ENCODE measurements at regions of chr2 and their contacts with region 1.

Region 1: DNA sequence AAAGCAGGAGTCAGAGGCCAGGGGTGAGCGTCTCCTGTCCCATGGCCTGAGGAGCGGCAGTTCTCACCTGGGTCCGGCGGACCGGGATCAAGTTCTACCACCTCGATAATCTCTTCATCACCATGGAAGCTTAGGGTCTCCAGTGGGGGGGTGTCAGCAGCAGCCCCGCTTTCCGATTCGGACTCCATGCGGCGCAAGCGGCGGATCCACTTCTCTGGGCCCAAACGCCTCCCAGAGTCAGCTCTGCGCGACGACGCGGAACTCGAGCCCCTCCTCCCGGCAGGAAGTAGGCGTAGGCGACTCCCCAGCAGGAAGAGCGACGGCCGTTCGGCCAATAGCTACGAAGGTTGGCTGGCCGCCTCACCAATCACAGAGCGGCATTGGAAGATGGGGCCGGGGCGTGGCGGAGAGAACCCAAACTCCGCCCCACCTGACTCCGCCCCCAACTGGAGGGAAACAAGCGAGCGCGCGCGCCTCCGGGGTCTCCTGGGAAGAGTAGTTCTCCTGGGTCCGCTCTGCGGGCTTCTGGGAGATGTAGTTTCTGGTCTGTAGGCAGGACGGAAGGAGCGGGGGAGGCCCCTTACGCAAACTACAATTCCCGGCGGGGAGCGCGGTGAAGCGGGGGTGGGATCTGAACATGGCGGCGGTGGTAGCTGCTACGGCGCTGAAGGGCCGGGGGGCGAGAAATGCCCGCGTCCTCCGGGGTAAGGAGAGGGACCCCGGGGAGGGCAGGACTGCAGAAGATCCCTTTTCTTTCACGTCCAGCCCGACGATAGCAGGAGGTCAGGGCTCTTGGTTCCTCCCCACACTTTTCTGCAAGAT is at the starts of genes AAMP and PNKD:
- DNase-seq: peak; percentile 100
- ATAC-seq: peak; percentile 94
- total RNA-seq, gene AAMP: 48.4 TPM
- total RNA-seq, gene PNKD: 72.9 TPM

Region 2: GRCh38 chr2:218186355-218186766 is 83.7 kb before region 1 on chr2:
- intact Hi-C with region 1: loop called (anchors 5 kb)
- DNase-seq: peak; percentile 72
- ATAC-seq: peak; percentile 95

Region 3: DNA sequence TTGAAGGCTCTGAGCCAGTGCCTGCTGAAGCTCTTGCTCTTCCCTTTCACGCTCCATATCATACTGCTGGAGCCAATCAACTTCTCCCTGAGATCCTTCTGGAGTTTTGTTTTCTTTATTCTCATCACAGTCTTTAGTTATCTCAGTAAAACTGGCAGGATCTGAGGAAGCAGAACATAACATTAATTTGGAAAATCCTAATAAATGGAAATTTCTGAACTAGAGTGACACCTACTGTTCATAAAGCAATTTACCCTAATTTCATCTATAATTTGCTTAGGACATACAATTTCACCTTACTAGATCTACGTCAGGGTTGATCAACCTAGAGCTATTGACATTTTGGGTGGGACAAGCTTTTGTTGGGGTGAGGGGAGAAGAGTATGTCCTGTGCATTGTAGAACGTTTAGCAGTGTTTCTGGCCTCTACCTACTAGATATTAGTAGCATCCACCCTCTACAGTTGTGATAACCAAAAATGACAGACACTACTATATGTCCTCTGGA is 196.0 kb after region 1 on chr2:
- intact Hi-C with region 1: loop called (anchors 10 kb)
- DNase-seq: no peak
- ATAC-seq: peak; percentile 43

Region 4: GRCh38 chr2:218710687-218711549 is 440.8 kb after region 1 on chr2 and contains the start of gene TTLL4:
- intact Hi-C with region 1: no loop called
- DNase-seq: peak; percentile 99
- ATAC-seq: peak; percentile 99
- total RNA-seq, gene TTLL4: 5.6 TPM

Measured in Right ventricle myocardium superior (tissue), 1 donor.